ENCODE measurements at regions of chr20 and their contacts with region 1.

Region 1: GRCh38 chr20:9407805-9408421 is 106.5 kb upstream of the LAMP5 start:
- DNase-seq: peak; percentile 79
- H3K4me3 ChIP-seq: no peak overlapping the region
- H3K27ac ChIP-seq: no peak overlapping the region
- H3K4me1 ChIP-seq: peaks cover 2% of the 10 kb centered on the region
- H3K27me3 ChIP-seq: no peaks in the 10 kb centered on the region
- CTCF ChIP-seq: peak; percentile 69 to 73
- POLR2A ChIP-seq: no peak

Region 2: GRCh38 chr20:9392892-9393857 is 14.7 kb before region 1 on chr20:
- CTCF ChIA-PET with region 1: interaction called, 20 read pairs
- POLR2A ChIA-PET with region 1: no interaction called
- dilution Hi-C with region 1: no loop called
- intact Hi-C with region 1: no loop called
- DNase-seq: peak; percentile 37
- H3K4me3 ChIP-seq: no peak overlapping the region
- H3K27ac ChIP-seq: no peak overlapping the region
- H3K4me1 ChIP-seq: no peaks in the 10 kb centered on the region
- H3K27me3 ChIP-seq: no peaks in the 10 kb centered on the region
- CTCF ChIP-seq: peak; percentile 54 to 80
- POLR2A ChIP-seq: no peak

Region 3: GRCh38 chr20:9467995-9468394 is 60.1 kb after region 1 on chr20:
- CTCF ChIA-PET with region 1: interaction called, 14 read pairs
- POLR2A ChIA-PET with region 1: no interaction called
- dilution Hi-C with region 1: no loop called
- intact Hi-C with region 1: loop called (anchors 2 kb)
- DNase-seq: no peak
- H3K4me3 ChIP-seq: no peak overlapping the region
- H3K27ac ChIP-seq: no peak overlapping the region
- H3K4me1 ChIP-seq: no peaks in the 10 kb centered on the region
- H3K27me3 ChIP-seq: no peaks in the 10 kb centered on the region
- CTCF ChIP-seq: peak; percentile 48 to 52
- POLR2A ChIP-seq: no peak

Region 4: DNA sequence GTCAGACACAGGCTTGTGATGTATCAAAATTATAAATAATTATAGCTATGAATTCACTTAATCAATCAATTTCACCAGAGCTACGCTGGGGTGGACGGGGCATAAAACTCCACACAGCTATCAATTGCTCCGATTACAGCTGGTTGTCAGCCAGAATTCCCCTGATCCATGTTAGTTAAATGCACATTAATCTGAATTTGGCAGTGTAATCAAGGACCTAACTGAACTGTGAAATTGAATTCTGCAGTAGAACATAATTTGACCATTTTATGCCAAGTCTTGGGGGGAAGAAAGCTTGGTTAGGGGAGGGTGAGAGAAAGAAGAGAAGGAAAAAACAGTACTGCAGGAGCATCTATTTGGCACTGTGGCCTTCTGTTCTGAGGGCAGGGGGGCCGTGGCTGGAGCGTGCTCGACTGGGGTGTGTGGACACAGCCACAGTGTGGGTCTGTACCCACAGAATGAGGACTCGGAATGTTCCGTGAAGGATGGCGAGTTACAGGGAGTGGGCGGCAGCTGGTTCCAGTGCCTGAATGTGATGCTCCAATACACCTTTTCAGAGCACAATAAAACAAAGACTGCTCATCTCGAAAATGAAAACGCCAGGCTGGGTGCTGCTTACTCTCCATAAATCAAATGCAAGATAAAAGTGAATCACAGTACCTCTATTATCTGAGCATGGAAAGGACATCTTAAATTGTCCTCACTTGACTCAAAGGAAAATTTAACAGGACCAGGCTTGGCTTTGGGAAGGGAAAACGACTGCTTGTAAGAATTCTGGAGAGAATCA is 165.6 kb after region 1 on chr20:
- CTCF ChIA-PET with region 1: interaction called, 11 read pairs
- POLR2A ChIA-PET with region 1: no interaction called
- dilution Hi-C with region 1: no loop called
- intact Hi-C with region 1: no loop called
- DNase-seq: no peak
- H3K4me3 ChIP-seq: no peak overlapping the region
- H3K27ac ChIP-seq: no peak overlapping the region
- H3K4me1 ChIP-seq: no peaks in the 10 kb centered on the region
- H3K27me3 ChIP-seq: peaks cover 6 to 10% of the 10 kb centered on the region in 2 experiments
- CTCF ChIP-seq: no peak
- POLR2A ChIP-seq: no peak

Region 5: GRCh38 chr20:9609887-9610502 is 202.1 kb after region 1 on chr20:
- CTCF ChIA-PET with region 1: interaction called, 776 read pairs
- POLR2A ChIA-PET with region 1: interaction called, 6 read pairs
- dilution Hi-C with region 1: no loop called
- intact Hi-C with region 1: loop called (anchors 1 kb)
- DNase-seq: peak; percentile 82
- H3K4me3 ChIP-seq: no peak overlapping the region
- H3K27ac ChIP-seq: no peak overlapping the region
- H3K4me1 ChIP-seq: no peaks in the 10 kb centered on the region
- H3K27me3 ChIP-seq: peaks cover 2 to 4% of the 10 kb centered on the region in 2 experiments
- CTCF ChIP-seq: peak; percentile 44 to 54
- POLR2A ChIP-seq: no peak

Region 6: GRCh38 chr20:9912858-9913434 is 505.0 kb after region 1 on chr20:
- CTCF ChIA-PET with region 1: interaction called, 40 read pairs
- POLR2A ChIA-PET with region 1: no interaction called
- dilution Hi-C with region 1: no loop called
- intact Hi-C with region 1: loop called (anchors 1 kb)
- DNase-seq: peak; percentile 63
- H3K4me3 ChIP-seq: no peak overlapping the region
- H3K27ac ChIP-seq: no peak overlapping the region
- H3K4me1 ChIP-seq: no peaks in the 10 kb centered on the region
- H3K27me3 ChIP-seq: peaks cover 4 to 6% of the 10 kb centered on the region in 2 experiments
- CTCF ChIP-seq: peak; percentile 69 to 72
- POLR2A ChIP-seq: no peak

Measured in endothelial cell of umbilical vein (primary cell).